Activated CD4-positive, alpha-beta T cell treated with anti-CD3 and anti-CD28 coated beads, Interleukin-2, amount 10 ng/mL, durations not matched to agents 24 days and 14 days (primary cell): ENCODE measurements at regions of chr16 and their contacts with region 1.

Region 1: DNA sequence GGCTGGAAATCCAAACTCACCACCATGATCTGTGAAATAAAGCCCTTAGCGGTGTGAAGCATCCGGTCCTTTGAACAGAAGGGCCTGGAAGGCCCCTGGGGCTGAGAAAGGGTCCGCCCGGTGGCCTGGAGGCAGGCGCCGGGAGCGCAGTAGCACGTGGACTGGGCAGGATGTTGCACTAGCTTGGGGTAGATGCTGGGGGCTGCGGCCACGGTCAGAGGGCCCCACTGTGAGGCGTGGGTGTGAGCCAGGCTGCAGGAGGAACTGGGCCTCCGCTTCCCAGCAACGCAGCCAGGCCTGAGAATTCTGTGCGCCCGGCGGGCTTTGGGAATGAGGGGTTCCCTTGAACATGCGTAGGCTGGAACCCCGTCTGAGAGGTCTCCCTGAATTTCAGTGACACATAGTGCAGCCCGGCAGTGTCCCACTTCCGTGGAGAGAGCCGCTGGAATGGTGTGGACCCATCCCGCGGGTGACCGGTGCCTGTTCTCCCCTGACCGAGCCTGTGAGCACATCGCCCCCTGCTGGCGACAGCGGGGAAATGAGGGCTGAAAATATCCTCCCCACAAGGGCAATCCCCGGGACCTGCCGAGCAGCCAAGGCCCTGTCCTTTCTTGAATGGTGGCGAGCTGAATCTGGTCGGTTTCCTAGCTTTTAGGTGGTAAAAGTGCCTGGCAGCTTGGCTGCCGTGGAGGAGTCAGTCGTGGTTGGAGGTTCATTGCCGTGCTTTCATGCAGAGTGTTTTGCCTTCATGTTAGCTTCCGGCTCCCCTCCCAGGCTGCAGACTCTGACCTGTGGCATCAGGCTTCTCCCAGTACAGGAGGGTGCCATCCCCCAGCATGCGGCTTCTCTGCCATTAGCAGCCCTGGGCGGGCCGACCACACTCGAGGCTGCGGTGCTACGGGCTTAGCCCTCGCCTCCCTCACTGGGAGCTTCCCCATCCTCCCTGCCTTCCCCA is 43.8 kb downstream of the DNAJA2 start:
- DNase-seq: peak; percentile 92
- H3K4me3 Mint-ChIP-seq: no peak overlapping the region
- H3K27ac Mint-ChIP-seq: peak overlapping the region; percentile 36
- H3K4me1 Mint-ChIP-seq: peaks cover 2% of the 10 kb centered on the region
- H3K27me3 Mint-ChIP-seq: no peaks in the 10 kb centered on the region

Region 2: DNA sequence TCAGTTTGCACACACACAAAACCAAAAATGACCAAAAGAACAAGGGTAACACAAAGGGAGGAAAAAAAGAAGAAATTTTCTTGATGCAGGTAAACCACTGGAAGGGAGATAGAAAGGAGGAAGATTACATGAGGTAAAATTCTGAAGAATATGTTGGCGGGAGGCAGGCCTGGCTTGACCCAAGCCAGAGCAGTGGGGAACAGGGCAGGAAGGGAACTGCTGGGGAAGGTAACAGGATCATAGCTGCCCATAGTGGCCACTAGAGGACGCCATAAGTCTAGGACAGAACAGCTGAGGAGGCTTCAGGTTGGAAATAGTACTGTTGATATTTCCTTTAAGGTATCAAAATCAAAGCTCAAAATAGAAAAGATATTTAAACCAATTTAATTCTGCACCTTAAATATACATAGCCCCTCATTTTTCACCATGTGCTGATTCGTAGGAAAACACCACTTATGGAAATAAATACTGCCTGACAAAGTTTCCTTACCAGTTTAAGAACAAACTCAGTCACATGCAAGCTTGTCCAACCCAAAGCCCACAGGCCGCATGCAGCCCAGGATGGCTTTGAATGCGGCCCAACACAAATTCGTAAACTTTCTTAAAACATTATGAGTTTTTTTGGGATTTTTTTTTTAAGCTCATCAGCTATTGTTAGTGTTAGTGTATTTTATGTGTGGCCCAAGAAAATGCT is 256.2 kb before region 1 on chr16:
- intact Hi-C with region 1: loop called (anchors 1 kb)
- DNase-seq: peak; percentile 84
- H3K4me3 Mint-ChIP-seq: no peak overlapping the region
- H3K27ac Mint-ChIP-seq: no peak overlapping the region
- H3K4me1 Mint-ChIP-seq: peaks cover 3% of the 10 kb centered on the region
- H3K27me3 Mint-ChIP-seq: no peaks in the 10 kb centered on the region

Region 3: GRCh38 chr16:46853713-46854443 is 75.8 kb before region 1 on chr16:
- intact Hi-C with region 1: loop called (anchors 1 kb)
- DNase-seq: peak; percentile 90
- H3K4me3 Mint-ChIP-seq: no peak overlapping the region
- H3K27ac Mint-ChIP-seq: no peak overlapping the region
- H3K4me1 Mint-ChIP-seq: peaks cover 2% of the 10 kb centered on the region
- H3K27me3 Mint-ChIP-seq: peaks cover 3% of the 10 kb centered on the region

Region 4: GRCh38 chr16:46918861-46919792 is 10.5 kb before region 1 on chr16:
- intact Hi-C with region 1: no loop called
- DNase-seq: no peak
- H3K4me3 Mint-ChIP-seq: no peak overlapping the region
- H3K27ac Mint-ChIP-seq: no peak overlapping the region
- H3K4me1 Mint-ChIP-seq: peaks cover 4% of the 10 kb centered on the region
- H3K27me3 Mint-ChIP-seq: no peaks in the 10 kb centered on the region